Activated CD8-positive, alpha-beta T cell treated with anti-CD3 and anti-CD28 coated beads for 36 hours (primary cell): ENCODE measurements at regions of chr3 and their contacts with region 1.

Region 1: GRCh38 chr3:4826237-4827100 is 152.8 kb upstream of the BHLHE40 start:
- DNase-seq: no peak
- ATAC-seq: no peak
- H3K4me3 Mint-ChIP-seq: peak overlapping the region; percentile 68
- H3K27ac Mint-ChIP-seq: peak overlapping the region; percentile 100
- H3K4me1 Mint-ChIP-seq: peaks cover 95% of the 10 kb centered on the region
- H3K27me3 Mint-ChIP-seq: no peaks in the 10 kb centered on the region
- CTCF ChIP-seq: no peak

Region 2: GRCh38 chr3:4741404-4742307 is 84.8 kb before region 1 on chr3:
- CTCF ChIA-PET with region 1: no interaction called
- POLR2A ChIA-PET with region 1: interaction called, 8 read pairs
- intact Hi-C with region 1: loop called (anchors 5 kb)
- DNase-seq: peak; percentile 24
- ATAC-seq: peak; percentile 2
- H3K4me3 Mint-ChIP-seq: no peak overlapping the region
- H3K27ac Mint-ChIP-seq: peak overlapping the region; percentile 91
- H3K4me1 Mint-ChIP-seq: peaks cover 54% of the 10 kb centered on the region
- H3K27me3 Mint-ChIP-seq: no peaks in the 10 kb centered on the region
- CTCF ChIP-seq: no peak

Region 3: GRCh38 chr3:4776980-4777581 is 49.4 kb before region 1 on chr3:
- CTCF ChIA-PET with region 1: no interaction called
- POLR2A ChIA-PET with region 1: no interaction called
- intact Hi-C with region 1: no loop called
- DNase-seq: peak; percentile 28
- ATAC-seq: peak; percentile 82
- H3K4me3 Mint-ChIP-seq: no peak overlapping the region
- H3K27ac Mint-ChIP-seq: peak overlapping the region; percentile 93
- H3K4me1 Mint-ChIP-seq: peaks cover 49% of the 10 kb centered on the region
- H3K27me3 Mint-ChIP-seq: no peaks in the 10 kb centered on the region
- CTCF ChIP-seq: no peak

Region 4: DNA sequence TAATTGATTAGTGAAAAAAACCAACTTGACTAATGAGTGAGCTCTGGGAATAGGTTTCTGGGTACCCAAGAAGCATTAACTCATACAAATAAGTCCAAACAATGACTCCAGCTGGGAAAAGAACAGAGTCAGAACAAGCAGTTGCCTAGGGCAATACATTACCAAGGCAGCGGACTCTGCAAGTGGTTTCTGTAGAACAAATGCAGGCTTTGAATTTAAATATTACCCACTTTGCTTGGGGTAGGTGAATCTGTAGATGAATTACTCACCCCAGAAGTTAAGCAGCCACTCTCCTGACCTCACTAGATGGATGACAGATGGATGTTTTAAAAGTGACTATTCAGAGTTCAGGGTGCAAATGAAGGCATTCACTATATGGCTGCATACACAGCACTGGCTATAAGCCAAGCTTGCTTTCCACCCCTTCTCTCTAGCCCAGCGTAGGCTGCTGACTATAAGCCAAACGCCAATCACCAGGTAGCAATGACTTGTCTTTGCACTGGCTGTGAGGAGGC is 79.7 kb after region 1 on chr3:
- CTCF ChIA-PET with region 1: no interaction called
- POLR2A ChIA-PET with region 1: interaction called, 5 read pairs
- intact Hi-C with region 1: loop called (anchors 10 kb)
- DNase-seq: peak; percentile 35
- ATAC-seq: peak; percentile 73
- H3K4me3 Mint-ChIP-seq: no peak overlapping the region
- H3K27ac Mint-ChIP-seq: no peak overlapping the region
- H3K4me1 Mint-ChIP-seq: peaks cover 68% of the 10 kb centered on the region
- H3K27me3 Mint-ChIP-seq: no peaks in the 10 kb centered on the region
- CTCF ChIP-seq: no peak

Region 5: GRCh38 chr3:4935347-4935746 is 108.9 kb after region 1 on chr3:
- CTCF ChIA-PET with region 1: no interaction called
- POLR2A ChIA-PET with region 1: no interaction called
- intact Hi-C with region 1: no loop called
- DNase-seq: peak; percentile 51
- ATAC-seq: peak; percentile 78
- H3K4me3 Mint-ChIP-seq: no peak overlapping the region
- H3K27ac Mint-ChIP-seq: peak overlapping the region; percentile 37
- H3K4me1 Mint-ChIP-seq: peaks cover 22% of the 10 kb centered on the region
- H3K27me3 Mint-ChIP-seq: no peaks in the 10 kb centered on the region
- CTCF ChIP-seq: no peak

Region 6: DNA sequence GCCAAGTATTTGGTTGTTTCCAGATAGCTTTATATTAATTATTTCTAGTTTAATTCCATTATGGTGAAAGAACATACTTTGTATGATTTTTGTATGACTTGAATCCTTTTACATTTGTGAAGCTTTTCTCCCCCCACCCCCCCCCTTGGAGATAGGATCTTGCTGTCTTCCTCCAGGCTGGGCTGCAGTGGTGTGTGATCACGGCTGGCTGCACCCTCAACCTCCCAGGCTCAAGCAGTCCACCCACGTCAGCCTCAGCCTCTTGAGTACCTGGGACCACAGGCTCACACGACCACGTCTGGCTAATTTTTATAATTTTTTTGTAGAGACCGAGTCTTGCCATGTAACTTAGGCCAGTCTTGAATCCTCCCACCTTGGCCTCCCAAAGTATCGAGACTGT is 325.1 kb after region 1 on chr3:
- CTCF ChIA-PET with region 1: no interaction called
- POLR2A ChIA-PET with region 1: no interaction called
- intact Hi-C with region 1: no loop called
- DNase-seq: no peak
- ATAC-seq: no peak
- H3K4me3 Mint-ChIP-seq: no peak overlapping the region
- H3K27ac Mint-ChIP-seq: no peak overlapping the region
- H3K4me1 Mint-ChIP-seq: peaks cover 64% of the 10 kb centered on the region
- H3K27me3 Mint-ChIP-seq: no peaks in the 10 kb centered on the region
- CTCF ChIP-seq: no peak